Adrenal gland (tissue), 19 donors: ENCODE measurements at regions of chr4 and their contacts with region 1.

Region 1: DNA sequence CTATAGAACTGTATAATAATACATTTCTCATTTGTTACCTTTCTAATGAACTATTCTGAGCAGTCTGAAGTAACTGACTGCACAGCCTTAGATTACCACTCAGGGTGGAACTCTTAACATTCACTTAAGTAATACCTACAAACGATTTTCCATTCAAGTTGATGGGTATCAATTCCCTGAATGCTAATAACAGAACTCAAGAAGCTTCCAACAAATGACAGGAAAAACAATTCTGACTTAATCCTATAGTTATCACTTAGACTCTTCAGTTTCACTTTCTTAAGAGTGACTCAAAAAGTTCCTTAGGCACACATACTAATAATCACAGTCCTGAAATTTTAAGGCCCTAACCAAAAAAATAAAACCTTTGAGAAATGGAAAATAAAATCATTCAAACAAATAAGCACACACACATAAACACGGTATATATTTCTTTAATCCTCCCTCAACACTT is 20.9 kb downstream of the HNRNPD start:
- DNase-seq: no peak
- H3K4me3 ChIP-seq: no peak overlapping the region
- H3K27ac ChIP-seq: peak overlapping the region in 1 of 5 donors; percentile 65
- H3K4me1 ChIP-seq: peaks cover 17 to 29% of the 10 kb centered on the region in 2 donors
- H3K27me3 ChIP-seq: no peaks in the 10 kb centered on the region
- CTCF ChIP-seq: no peak
- POLR2A ChIP-seq: no peak

Region 2: GRCh38 chr4:82284858-82285805 is 67.8 kb before region 1 on chr4:
- intact Hi-C with region 1: loop called in 1 of 2 experiments (anchors 10 kb)
- DNase-seq: peak; percentile 99 to 100 (median 100)
- H3K4me3 ChIP-seq: peak overlapping the region in 2 of 4 donors; percentile 25 to 46
- H3K27ac ChIP-seq: peak overlapping the region in 3 of 5 donors; percentile 10 to 71 (median 70)
- H3K4me1 ChIP-seq: no peaks in the 10 kb centered on the region
- H3K27me3 ChIP-seq: no peaks in the 10 kb centered on the region
- CTCF ChIP-seq: peak; percentile 59 to 93 (median 81)
- POLR2A ChIP-seq: no peak